PC-9 (cell line): ENCODE measurements at regions of chr2 and their contacts with region 1.

Region 1: GRCh38 chr2:142989273-142990204 is 112.1 kb downstream of the KYNU start:
- DNase-seq: peak in 1 of 2 experiments; percentile 48
- H3K4me3 ChIP-seq: no peak overlapping the region
- H3K27ac ChIP-seq: no peak overlapping the region
- H3K4me1 ChIP-seq: peaks cover 11% of the 10 kb centered on the region
- H3K27me3 ChIP-seq: no peaks in the 10 kb centered on the region
- CTCF ChIP-seq: peak; percentile 78

Region 2: DNA sequence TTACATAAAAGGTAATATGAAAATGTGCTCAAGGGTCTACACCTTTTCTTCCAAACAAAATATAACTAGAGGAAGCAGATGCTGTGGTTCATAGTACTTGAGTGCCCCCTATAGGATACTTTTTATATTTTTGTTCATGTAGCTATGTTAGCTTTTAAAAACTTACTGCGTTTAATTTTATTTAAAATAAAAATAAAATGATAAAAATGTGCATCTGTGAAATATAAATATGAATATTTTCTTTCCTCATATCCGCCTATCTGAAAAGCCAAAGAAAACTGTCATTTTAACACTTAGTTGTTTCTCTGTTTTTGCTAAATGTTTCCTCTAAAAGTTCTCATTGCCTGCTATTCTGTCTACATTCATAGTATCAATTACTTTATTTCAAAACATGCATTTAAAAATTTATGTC is 849.1 kb before region 1 on chr2:
- CTCF ChIA-PET with region 1: no interaction called
- POLR2A ChIA-PET with region 1: no interaction called
- intact Hi-C with region 1: loop called (anchors 10 kb)
- DNase-seq: no peak
- H3K4me3 ChIP-seq: no peak overlapping the region
- H3K27ac ChIP-seq: no peak overlapping the region
- H3K4me1 ChIP-seq: no peaks in the 10 kb centered on the region
- H3K27me3 ChIP-seq: no peaks in the 10 kb centered on the region
- CTCF ChIP-seq: peak; percentile 80

Region 3: GRCh38 chr2:142682528-142682927 is 307.0 kb before region 1 on chr2:
- CTCF ChIA-PET with region 1: no interaction called
- POLR2A ChIA-PET with region 1: no interaction called
- intact Hi-C with region 1: loop called (anchors 2 kb)
- DNase-seq: no peak
- H3K4me3 ChIP-seq: no peak overlapping the region
- H3K27ac ChIP-seq: no peak overlapping the region
- H3K4me1 ChIP-seq: no peaks in the 10 kb centered on the region
- H3K27me3 ChIP-seq: no peaks in the 10 kb centered on the region
- CTCF ChIP-seq: peak; percentile 47; the same call in 1 of the 2 replicates